ENCODE measurements at regions of chr12 and their contacts with region 1.

Region 1: DNA sequence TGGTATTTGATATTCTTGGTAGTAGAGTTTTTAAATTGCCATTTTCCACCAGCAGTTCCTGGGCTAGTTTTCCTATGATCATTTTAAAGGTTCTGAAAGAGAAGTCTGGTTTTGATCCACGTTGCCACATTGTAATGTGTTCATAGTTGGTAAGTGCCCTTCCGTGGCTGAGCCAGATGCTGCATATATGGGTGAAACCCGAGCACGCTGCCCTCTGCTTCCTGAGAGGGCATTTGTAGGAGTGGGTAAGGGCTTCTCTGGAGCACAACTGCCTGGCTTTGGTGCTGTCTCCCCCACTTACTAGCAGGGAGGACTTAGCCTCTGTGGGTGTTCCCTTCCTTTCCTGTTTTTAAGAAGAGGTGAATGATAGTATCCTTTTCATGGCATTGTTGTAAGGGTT is 7.1 kb downstream of the SNRNP35 start:
- DNase-seq: no peak
- ATAC-seq: no peak
- H3K4me3 ChIP-seq: no peak overlapping the region
- H3K27ac ChIP-seq: no peak overlapping the region
- H3K4me1 ChIP-seq: no peaks in the 10 kb centered on the region
- H3K27me3 ChIP-seq: no peaks in the 10 kb centered on the region
- CTCF ChIP-seq: no peak

Region 2: GRCh38 chr12:123223241-123223668 is 241.8 kb before region 1 on chr12:
- CTCF ChIA-PET with region 1: no interaction called
- POLR2A ChIA-PET with region 1: interaction called, 10 read pairs
- in situ Hi-C with region 1: no loop called
- intact Hi-C with region 1: no loop called
- DNase-seq: no peak
- ATAC-seq: 0 out of 2 replicates have a peak, but pooled peaks have one; percentile 17
- H3K4me3 ChIP-seq: no peak overlapping the region
- H3K27ac ChIP-seq: no peak overlapping the region
- H3K4me1 ChIP-seq: no peaks in the 10 kb centered on the region
- H3K27me3 ChIP-seq: no peaks in the 10 kb centered on the region
- CTCF ChIP-seq: no peak

Region 3: GRCh38 chr12:123365025-123365917 is 99.8 kb before region 1 on chr12:
- CTCF ChIA-PET with region 1: no interaction called
- POLR2A ChIA-PET with region 1: no interaction called
- in situ Hi-C with region 1: no loop called
- intact Hi-C with region 1: no loop called
- DNase-seq: peak; percentile 86
- ATAC-seq: peak; percentile 88
- H3K4me3 ChIP-seq: peak overlapping the region; percentile 71 to 93
- H3K27ac ChIP-seq: peak overlapping the region; percentile 98
- H3K4me1 ChIP-seq: peaks cover 11% of the 10 kb centered on the region
- H3K27me3 ChIP-seq: no peaks in the 10 kb centered on the region
- CTCF ChIP-seq: peak; percentile 88